Endothelial cell of umbilical vein (primary cell): ENCODE measurements at regions of chr7 and their contacts with region 1.

Region 1: DNA sequence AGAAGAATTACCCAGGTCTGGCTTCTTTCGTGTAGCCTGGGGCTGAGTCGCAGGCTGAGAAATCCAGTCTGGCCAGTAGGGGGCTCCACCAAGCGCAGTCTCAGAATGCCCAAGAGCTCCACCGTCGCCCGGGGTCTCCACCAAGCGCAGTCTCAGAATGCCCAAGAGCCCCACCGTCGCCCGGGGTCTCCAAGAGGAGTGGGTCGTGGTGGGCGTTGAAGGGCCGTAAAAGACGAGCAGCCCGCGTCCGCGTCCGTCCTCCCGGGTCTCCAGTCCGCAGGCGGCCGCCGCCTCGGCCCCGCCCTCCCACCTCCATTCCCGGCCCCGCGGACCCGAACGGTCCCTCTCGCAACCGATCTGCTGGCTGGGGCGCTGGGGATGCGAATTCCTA is 895 bp upstream of the ZYX start:
- DNase-seq: peak; percentile 89
- H3K4me3 ChIP-seq: peak overlapping the region; percentile 59 to 94 (median 67)
- H3K27ac ChIP-seq: peak overlapping the region; percentile 98
- H3K4me1 ChIP-seq: peaks cover 47% of the 10 kb centered on the region
- H3K27me3 ChIP-seq: no peaks in the 10 kb centered on the region
- CTCF ChIP-seq: peak; percentile 85 to 89
- POLR2A ChIP-seq: peak; percentile 54

Region 2: GRCh38 chr7:143287935-143288826 is 92.1 kb before region 1 on chr7 and contains the start of gene CASP2:
- CTCF ChIA-PET with region 1: interaction called, 9 read pairs
- POLR2A ChIA-PET with region 1: interaction called, 8 read pairs
- dilution Hi-C with region 1: no loop called
- intact Hi-C with region 1: loop called (anchors 1 kb)
- DNase-seq: peak; percentile 99
- H3K4me3 ChIP-seq: peak within 1 kb of the TSS; percentile 81 to 97 (median 91)
- H3K27ac ChIP-seq: peak within 1 kb of the TSS; percentile 91
- H3K4me1 ChIP-seq: peaks cover 24% of the 10 kb centered on the region
- H3K27me3 ChIP-seq: no peaks in the 10 kb centered on the region
- CTCF ChIP-seq: peak in 1 of 2 donors; percentile 40
- POLR2A ChIP-seq: peak; percentile 67
- total RNA-seq, gene CASP2: 57.9 and 61.7 TPM in 2 replicates

Region 3: GRCh38 chr7:143345428-143345900 is 34.8 kb before region 1 on chr7:
- CTCF ChIA-PET with region 1: interaction called, 10 read pairs
- POLR2A ChIA-PET with region 1: no interaction called
- dilution Hi-C with region 1: no loop called
- intact Hi-C with region 1: loop called (anchors 1 kb)
- DNase-seq: peak; percentile 55
- H3K4me3 ChIP-seq: peak overlapping the region in 2 of 3 experiments; percentile 21 to 47
- H3K27ac ChIP-seq: no peak overlapping the region
- H3K4me1 ChIP-seq: peaks cover 4% of the 10 kb centered on the region
- H3K27me3 ChIP-seq: peaks cover 20 to 24% of the 10 kb centered on the region in 2 experiments
- CTCF ChIP-seq: peak; percentile 58 to 73
- POLR2A ChIP-seq: no peak

Region 4: DNA sequence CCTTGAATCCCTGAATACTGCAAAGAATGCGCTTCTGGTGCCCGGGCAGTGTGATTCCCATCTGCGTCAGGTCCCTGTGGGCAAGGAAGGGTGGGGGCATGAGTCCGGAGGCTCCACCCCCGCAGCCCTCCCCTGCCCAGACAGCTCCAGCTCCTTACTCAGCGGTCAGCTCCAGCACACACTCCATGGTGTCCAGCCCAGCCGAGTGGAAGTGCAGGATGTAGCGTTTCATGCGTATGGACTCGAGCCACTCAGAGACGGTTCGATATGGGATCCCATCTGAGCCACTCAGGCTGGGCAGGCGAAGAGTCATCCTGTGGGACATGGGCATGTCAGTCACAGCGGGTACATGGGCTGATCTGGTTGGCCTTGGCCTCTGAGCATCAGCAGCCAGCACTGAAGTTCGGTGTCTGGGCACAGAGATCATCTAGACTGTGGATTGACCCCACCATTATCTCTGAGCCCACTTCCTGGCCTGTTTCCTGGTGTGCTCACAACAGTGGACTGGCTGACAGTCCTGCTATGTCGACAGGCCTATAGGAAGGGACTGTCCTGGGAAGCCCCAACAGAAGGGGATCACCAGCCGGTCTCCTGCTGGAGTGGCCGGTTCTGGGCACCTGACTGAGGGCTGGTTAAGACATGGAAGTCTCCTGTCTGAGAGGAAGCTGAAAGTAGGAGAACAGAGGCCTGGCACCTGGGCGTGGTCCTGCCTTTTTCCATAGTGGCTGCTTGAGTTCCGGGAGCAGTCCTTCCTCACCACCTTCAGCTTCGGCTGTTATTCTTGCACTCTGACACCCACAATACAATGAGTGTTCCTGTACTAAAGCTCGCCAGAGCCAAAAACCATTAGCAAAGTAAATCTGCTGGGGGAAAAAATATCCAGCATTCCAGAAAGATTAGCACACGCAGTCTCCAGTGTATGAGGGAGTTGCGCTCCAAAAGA is 11.5 kb after region 1 on chr7:
- CTCF ChIA-PET with region 1: interaction called, 15 read pairs
- POLR2A ChIA-PET with region 1: interaction called, 17 read pairs
- dilution Hi-C with region 1: no loop called
- intact Hi-C with region 1: loop called (anchors 1 kb)
- DNase-seq: peak; percentile 84
- H3K4me3 ChIP-seq: no peak overlapping the region
- H3K27ac ChIP-seq: peak overlapping the region; percentile 88
- H3K4me1 ChIP-seq: peaks cover 79% of the 10 kb centered on the region
- H3K27me3 ChIP-seq: no peaks in the 10 kb centered on the region
- CTCF ChIP-seq: no peak
- POLR2A ChIP-seq: peak; percentile 58

Region 5: DNA sequence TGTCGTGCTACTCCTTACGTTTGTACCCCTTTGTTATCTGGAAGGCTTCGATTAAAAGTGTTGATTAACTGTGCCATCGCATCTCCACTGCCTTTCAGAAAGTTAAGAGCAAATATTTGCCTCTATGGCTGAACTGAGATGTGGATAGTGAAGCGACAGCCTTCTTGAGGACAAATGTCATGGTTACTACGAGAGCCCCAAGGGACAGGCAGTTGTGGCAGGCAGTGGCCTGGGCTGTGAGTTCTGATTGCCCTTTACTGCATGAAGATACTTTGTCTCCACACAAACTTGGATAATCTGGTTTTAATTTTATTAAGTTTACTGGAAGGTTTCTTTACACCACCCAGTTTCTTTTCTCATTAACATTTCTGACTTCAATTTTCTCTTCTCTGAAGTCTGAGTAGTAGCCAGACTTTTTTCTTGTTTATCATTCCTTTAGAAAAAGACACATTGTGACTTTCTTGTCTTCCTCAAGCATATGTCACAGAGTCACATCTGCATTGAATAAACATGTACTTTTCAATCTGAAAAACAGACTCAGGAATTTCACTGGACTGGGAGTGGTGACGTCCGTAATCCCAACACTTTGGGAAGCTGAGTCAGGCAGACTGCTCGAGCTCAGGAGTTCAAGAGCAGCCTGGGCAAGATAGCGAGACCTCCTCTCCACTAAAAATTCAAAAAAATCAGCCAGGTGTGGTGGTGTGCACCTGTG is 99.0 kb after region 1 on chr7:
- CTCF ChIA-PET with region 1: no interaction called
- POLR2A ChIA-PET with region 1: no interaction called
- dilution Hi-C with region 1: no loop called
- intact Hi-C with region 1: no loop called
- DNase-seq: no peak
- H3K4me3 ChIP-seq: no peak overlapping the region
- H3K27ac ChIP-seq: no peak overlapping the region
- H3K4me1 ChIP-seq: no peaks in the 10 kb centered on the region
- H3K27me3 ChIP-seq: no peaks in the 10 kb centered on the region
- CTCF ChIP-seq: no peak
- POLR2A ChIP-seq: no peak

Region 6: GRCh38 chr7:143499246-143499645 is 119.0 kb after region 1 on chr7:
- CTCF ChIA-PET with region 1: interaction called, 13 read pairs
- POLR2A ChIA-PET with region 1: interaction called, 4 read pairs
- dilution Hi-C with region 1: loop called (anchors 25 kb)
- intact Hi-C with region 1: loop called (anchors 5 kb)
- DNase-seq: peak; percentile 97
- H3K4me3 ChIP-seq: peak overlapping the region in 1 of 3 experiments; percentile 31
- H3K27ac ChIP-seq: peak overlapping the region; percentile 99
- H3K4me1 ChIP-seq: peaks cover 51% of the 10 kb centered on the region
- H3K27me3 ChIP-seq: no peaks in the 10 kb centered on the region
- CTCF ChIP-seq: no peak
- POLR2A ChIP-seq: peak; percentile 61

Region 7: DNA sequence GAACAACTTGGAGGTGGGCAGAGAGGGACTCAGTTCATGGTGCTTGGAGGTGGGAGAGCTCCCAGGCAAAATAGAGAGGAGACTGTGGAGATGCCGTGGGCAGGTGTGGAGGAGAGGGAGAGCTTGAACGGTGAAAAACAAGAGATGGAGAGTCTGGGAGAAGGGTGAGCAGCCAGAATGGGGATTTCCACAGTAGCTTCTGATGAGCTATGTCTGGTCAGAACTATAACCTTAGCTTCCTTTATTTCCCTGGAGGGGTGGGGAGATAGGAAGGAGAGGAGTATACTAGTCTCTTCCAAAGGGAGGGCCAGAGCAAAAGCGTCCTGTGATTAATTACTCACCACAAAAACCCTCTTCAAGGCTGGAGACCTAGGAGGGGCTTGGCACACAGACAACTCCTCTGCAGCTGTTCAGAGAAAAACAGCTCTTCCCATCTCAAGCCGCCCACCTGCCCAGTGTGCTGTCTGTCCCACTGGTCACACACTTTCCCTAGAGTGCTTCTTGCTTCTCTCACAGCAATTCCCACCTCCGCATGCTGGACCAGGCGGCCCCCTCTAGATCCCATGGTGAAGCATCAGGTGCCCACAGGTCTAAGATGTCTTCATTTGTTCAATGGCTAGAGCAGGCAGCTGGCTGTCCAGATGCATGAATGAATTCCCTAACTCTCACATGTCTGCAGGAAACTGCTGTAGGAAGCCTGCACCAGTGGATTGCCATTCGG is 139.3 kb after region 1 on chr7:
- CTCF ChIA-PET with region 1: no interaction called
- POLR2A ChIA-PET with region 1: no interaction called
- dilution Hi-C with region 1: loop called (anchors 25 kb)
- intact Hi-C with region 1: no loop called
- DNase-seq: peak; percentile 60
- H3K4me3 ChIP-seq: no peak overlapping the region
- H3K27ac ChIP-seq: no peak overlapping the region
- H3K4me1 ChIP-seq: peaks cover 2% of the 10 kb centered on the region
- H3K27me3 ChIP-seq: no peaks in the 10 kb centered on the region
- CTCF ChIP-seq: no peak
- POLR2A ChIP-seq: no peak